ENCODE measurements at regions of chr7 and their contacts with region 1.

Region 1: GRCh38 chr7:93890464-93891068 is at the start of gene TFPI2:
- DNase-seq: no peak
- ATAC-seq: peak; percentile 67
- H3K4me3 ChIP-seq: peak within 1 kb of the TSS; percentile 57
- H3K27ac ChIP-seq: no peak within 1 kb of the TSS
- H3K4me1 ChIP-seq: no peaks in the 10 kb centered on the region
- H3K27me3 ChIP-seq: peaks cover 0 to 12% of the 10 kb centered on the region in 2 experiments; a peak in 3 of 4 replicates
- CTCF ChIP-seq: no peak; a peak in 1 of 6 replicates
- EP300 ChIP-seq: no peak
- POLR2A ChIP-seq: no peak
- RAD21 ChIP-seq: no peak
- polyA plus RNA-seq, gene TFPI2: 0.07 TPM in 1 of 2 experiments, not detected in the other

Region 2: GRCh38 chr7:93856323-93856722 is 34.2 kb before region 1 on chr7:
- CTCF ChIA-PET with region 1: no interaction called
- POLR2A ChIA-PET with region 1: no interaction called
- RAD21 ChIA-PET with region 1: no interaction called
- SMC1A ChIA-PET with region 1: no interaction called
- in situ Hi-C with region 1: no loop called
- intact Hi-C with region 1: no loop called
- DNase-seq: no peak
- ATAC-seq: peak; percentile 60
- H3K4me3 ChIP-seq: no peak overlapping the region
- H3K27ac ChIP-seq: no peak overlapping the region
- H3K4me1 ChIP-seq: no peaks in the 10 kb centered on the region
- H3K27me3 ChIP-seq: no peaks in the 10 kb centered on the region
- CTCF ChIP-seq: no peak
- EP300 ChIP-seq: no peak
- POLR2A ChIP-seq: no peak
- RAD21 ChIP-seq: no peak

Region 3: DNA sequence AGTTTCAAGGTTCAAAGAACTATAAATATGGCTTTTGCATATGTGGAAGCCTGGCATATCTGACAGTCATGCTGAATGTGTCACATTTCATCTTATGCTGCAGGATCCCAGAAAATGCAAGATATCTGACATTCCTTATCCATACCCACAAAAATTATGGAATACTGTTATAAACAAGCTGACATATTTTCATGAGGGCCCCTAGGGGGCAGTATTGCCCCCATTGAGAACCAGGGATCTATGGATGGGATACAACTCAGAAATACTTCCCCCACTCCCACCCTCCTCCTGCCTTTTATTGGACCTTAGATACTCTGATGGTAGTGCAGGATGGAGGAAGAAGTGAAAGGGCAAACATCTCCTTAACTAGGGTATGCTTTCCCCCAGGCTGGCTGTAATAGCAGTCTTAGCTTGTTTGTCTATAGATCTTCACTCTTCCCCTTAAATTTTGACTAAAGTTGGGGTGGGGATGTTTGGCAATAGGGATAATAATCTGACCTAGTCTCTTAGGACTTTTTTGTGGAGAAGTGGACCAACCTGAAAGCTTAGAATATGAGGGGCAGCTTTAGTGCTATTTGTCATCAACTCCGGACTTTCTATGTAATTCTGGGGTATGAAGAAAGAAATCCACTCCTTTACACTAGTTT is 12.3 kb after region 1 on chr7:
- CTCF ChIA-PET with region 1: interaction called, 13 read pairs
- POLR2A ChIA-PET with region 1: no interaction called
- RAD21 ChIA-PET with region 1: interaction called, 3 read pairs
- SMC1A ChIA-PET with region 1: interaction called, 4 read pairs
- in situ Hi-C with region 1: no loop called
- intact Hi-C with region 1: no loop called
- DNase-seq: no peak
- ATAC-seq: peak; percentile 56
- H3K4me3 ChIP-seq: no peak overlapping the region
- H3K27ac ChIP-seq: no peak overlapping the region
- H3K4me1 ChIP-seq: no peaks in the 10 kb centered on the region
- H3K27me3 ChIP-seq: no peaks in the 10 kb centered on the region
- CTCF ChIP-seq: peak; percentile 66 to 72 (median 69)
- EP300 ChIP-seq: no peak
- POLR2A ChIP-seq: no peak
- RAD21 ChIP-seq: peak; percentile 86

Measured in GM12878 (cell line).